ENCODE measurements at regions of chr10 and their contacts with region 1.

Region 1: DNA sequence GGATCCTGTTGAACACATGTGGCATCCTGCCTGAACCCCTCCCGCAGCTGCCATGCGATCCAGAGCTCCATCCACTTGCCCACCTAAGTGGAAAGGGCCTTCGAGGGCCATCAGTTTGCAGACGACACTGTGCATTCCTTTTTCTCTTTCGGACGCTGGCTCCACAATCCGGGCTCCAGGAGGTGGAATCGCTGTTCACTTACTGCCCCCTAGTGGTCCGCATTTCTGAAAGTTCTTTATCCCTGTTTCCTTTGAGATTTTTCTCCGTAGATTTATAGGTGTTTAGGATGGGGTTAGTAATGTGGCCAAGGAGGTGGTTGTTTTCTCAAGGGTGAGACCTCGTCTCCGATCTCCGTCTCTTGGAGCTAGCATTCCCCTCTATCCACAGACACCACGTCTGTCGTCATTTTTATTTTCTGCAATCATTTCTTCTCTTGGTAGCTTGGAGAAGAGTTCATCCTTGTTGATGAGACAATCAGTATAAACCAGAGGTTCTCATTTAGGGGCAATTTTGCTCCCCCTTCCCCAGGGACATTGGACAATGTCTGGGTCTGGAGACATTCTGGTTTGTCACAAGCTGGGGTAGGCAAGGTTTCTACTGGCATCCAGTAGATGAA is 204.6 kb downstream of the ARHGAP21 start:
- DNase-seq: peak; percentile 12 to 42 (median 19)
- H3K4me3 ChIP-seq: no peak overlapping the region
- H3K4me3 Mint-ChIP-seq: peak overlapping the region in 7 of 8 donors; percentile 10 to 78 (median 51)
- H3K27ac ChIP-seq: no peak overlapping the region
- H3K27ac Mint-ChIP-seq: no peak overlapping the region
- H3K4me1 ChIP-seq: peaks cover 12% of the 10 kb centered on the region
- H3K4me1 Mint-ChIP-seq: peaks cover 8 to 15% (median 12%) of the 10 kb centered on the region in 4 donors
- H3K27me3 ChIP-seq: no peaks in the 10 kb centered on the region
- H3K27me3 Mint-ChIP-seq: no peaks in the 10 kb centered on the region

Region 2: GRCh38 chr10:23994479-23995046 is 524.5 kb before region 1 on chr10:
- CTCF ChIA-PET with region 1: interaction called, 6 read pairs
- POLR2A ChIA-PET with region 1: no interaction called
- intact Hi-C with region 1: loop called (anchors 5 kb)
- DNase-seq: no peak
- H3K4me3 ChIP-seq: no peak overlapping the region
- H3K4me3 Mint-ChIP-seq: no peak overlapping the region
- H3K27ac ChIP-seq: no peak overlapping the region
- H3K27ac Mint-ChIP-seq: no peak overlapping the region
- H3K4me1 ChIP-seq: no peaks in the 10 kb centered on the region
- H3K4me1 Mint-ChIP-seq: no peaks in the 10 kb centered on the region
- H3K27me3 ChIP-seq: no peaks in the 10 kb centered on the region
- H3K27me3 Mint-ChIP-seq: no peaks in the 10 kb centered on the region

Region 3: GRCh38 chr10:24197263-24197662 is 321.8 kb before region 1 on chr10:
- CTCF ChIA-PET with region 1: interaction called, 3 read pairs
- POLR2A ChIA-PET with region 1: no interaction called
- intact Hi-C with region 1: loop called (anchors 5 kb)
- DNase-seq: no peak
- H3K4me3 ChIP-seq: no peak overlapping the region
- H3K4me3 Mint-ChIP-seq: no peak overlapping the region
- H3K27ac ChIP-seq: no peak overlapping the region
- H3K27ac Mint-ChIP-seq: no peak overlapping the region
- H3K4me1 ChIP-seq: no peaks in the 10 kb centered on the region
- H3K4me1 Mint-ChIP-seq: no peaks in the 10 kb centered on the region
- H3K27me3 ChIP-seq: no peaks in the 10 kb centered on the region
- H3K27me3 Mint-ChIP-seq: no peaks in the 10 kb centered on the region

Measured in CD4-positive, alpha-beta memory T cell (primary cell).